ENCODE measurements at regions of chr7 and their contacts with region 1.

Region 1: GRCh38 chr7:144738708-144739314 is 97.0 kb downstream of the TPK1 start:
- DNase-seq: peak; percentile 52
- ATAC-seq: peak; percentile 80
- H3K4me3 ChIP-seq: no peak overlapping the region
- H3K27ac ChIP-seq: no peak overlapping the region
- H3K4me1 ChIP-seq: no peaks in the 10 kb centered on the region
- H3K27me3 ChIP-seq: no peaks in the 10 kb centered on the region
- CTCF ChIP-seq: peak; percentile 75

Region 2: DNA sequence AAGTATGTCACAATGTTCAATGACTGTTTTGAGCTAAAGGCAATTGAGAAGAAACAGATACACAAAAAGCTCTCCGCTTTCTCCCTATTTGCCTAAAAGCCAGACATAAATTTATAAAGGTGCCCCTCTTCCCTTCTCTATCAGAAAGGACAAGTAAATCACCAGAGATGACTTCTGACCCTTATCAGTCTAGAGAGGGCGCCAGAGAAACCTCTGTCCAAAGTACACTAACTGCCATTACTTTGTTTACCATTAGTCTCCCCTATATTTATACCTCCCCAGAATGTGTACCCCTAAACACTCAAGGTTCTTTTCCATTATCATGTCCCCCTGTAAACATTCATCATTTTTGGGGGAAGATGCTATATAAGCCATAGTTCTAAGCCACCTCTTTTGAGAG is 47.7 kb after region 1 on chr7:
- CTCF ChIA-PET with region 1: interaction called, 10 read pairs
- POLR2A ChIA-PET with region 1: no interaction called
- intact Hi-C with region 1: loop called (anchors 1 kb)
- DNase-seq: no peak
- ATAC-seq: peak; percentile 42; the same call in 1 of the 2 replicates
- H3K4me3 ChIP-seq: no peak overlapping the region
- H3K27ac ChIP-seq: no peak overlapping the region
- H3K4me1 ChIP-seq: no peaks in the 10 kb centered on the region
- H3K27me3 ChIP-seq: no peaks in the 10 kb centered on the region
- CTCF ChIP-seq: peak; percentile 37

Region 3: GRCh38 chr7:144796919-144797318 is 58.1 kb after region 1 on chr7:
- CTCF ChIA-PET with region 1: no interaction called
- POLR2A ChIA-PET with region 1: no interaction called
- intact Hi-C with region 1: no loop called
- DNase-seq: no peak
- ATAC-seq: no peak
- H3K4me3 ChIP-seq: no peak overlapping the region
- H3K27ac ChIP-seq: no peak overlapping the region
- H3K4me1 ChIP-seq: no peaks in the 10 kb centered on the region
- H3K27me3 ChIP-seq: no peaks in the 10 kb centered on the region
- CTCF ChIP-seq: no peak

Region 4: DNA sequence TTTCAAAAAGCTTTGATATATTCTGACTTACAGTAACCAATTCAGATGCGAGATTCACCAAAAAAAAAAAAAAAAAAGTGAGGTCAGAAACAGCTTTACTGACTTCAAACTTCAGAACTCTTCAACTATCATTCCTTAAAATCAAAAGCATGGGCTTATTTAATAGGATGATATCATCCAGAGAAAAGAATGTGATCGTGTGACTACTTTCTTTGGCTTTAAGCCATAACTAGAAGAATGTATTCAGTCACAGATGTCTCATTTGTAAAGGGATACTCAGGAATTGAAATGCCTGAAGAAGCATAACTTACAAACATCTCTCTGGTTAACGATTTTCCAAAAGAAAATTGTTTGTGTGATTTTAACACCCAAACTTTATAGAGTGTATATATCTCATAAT is 85.5 kb after region 1 on chr7:
- CTCF ChIA-PET with region 1: no interaction called
- POLR2A ChIA-PET with region 1: no interaction called
- intact Hi-C with region 1: loop called (anchors 1 kb)
- DNase-seq: peak; percentile 82
- ATAC-seq: peak; percentile 88
- H3K4me3 ChIP-seq: no peak overlapping the region
- H3K27ac ChIP-seq: no peak overlapping the region
- H3K4me1 ChIP-seq: peaks cover 14% of the 10 kb centered on the region
- H3K27me3 ChIP-seq: no peaks in the 10 kb centered on the region
- CTCF ChIP-seq: no peak

Region 5: DNA sequence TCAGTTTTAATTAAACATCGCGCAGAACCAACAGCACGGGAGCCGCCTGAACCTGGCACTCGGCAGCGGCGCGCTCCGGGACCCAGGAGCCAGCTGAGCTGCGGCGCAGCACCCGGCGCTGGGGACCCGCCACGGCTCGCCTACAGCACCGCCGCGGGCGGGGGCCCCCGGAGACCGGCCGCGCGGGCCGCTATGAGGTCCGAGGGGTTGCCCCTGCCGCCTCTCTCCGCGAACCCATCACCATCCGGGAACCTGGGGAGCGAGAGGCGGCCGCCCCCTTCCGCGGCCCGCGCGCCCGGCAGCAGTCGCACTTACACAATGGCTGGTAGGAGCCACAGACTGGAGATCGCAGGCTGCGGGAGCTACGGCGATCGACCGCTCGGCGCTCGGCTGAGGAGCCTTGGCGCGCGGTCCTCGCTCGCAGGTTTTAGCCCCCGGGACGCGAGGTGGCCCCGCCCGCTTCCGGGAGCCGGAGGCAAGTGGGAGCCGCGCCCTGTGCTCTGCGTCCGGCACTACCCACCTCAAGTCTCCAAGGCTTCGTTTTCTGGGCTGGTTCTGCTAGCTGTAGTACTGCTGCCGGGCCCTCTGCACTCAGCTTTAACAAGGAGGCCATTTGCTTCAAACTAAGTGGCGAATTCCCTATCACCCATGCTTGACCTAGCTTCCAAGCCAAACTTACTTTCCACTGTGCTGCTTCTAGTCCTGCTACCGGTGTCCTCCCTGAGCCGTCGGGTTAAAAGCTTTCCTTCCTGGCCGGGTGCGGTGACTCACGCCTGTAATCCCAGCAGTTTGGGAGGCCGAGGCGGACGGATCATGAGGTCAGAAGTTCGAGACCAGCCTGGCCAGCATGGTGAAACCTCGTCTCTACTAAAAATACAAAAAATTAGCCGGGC is 97.1 kb after region 1 on chr7 and contains the start of gene TPK1:
- CTCF ChIA-PET with region 1: interaction called, 7 read pairs
- POLR2A ChIA-PET with region 1: no interaction called
- intact Hi-C with region 1: loop called (anchors 2 kb)
- DNase-seq: peak; percentile 87
- ATAC-seq: peak; percentile 88
- H3K4me3 ChIP-seq: peak within 1 kb of the TSS; percentile 98
- H3K27ac ChIP-seq: peak within 1 kb of the TSS; percentile 70
- H3K4me1 ChIP-seq: peaks cover 10% of the 10 kb centered on the region
- H3K27me3 ChIP-seq: no peaks in the 10 kb centered on the region
- CTCF ChIP-seq: no peak
- total RNA-seq, gene TPK1: 1.3 and 4.5 TPM in 2 replicates

Measured in PC-3 (cell line).